T-cell (primary cell): ENCODE measurements at regions of chr5 and their contacts with region 1.

Region 1: DNA sequence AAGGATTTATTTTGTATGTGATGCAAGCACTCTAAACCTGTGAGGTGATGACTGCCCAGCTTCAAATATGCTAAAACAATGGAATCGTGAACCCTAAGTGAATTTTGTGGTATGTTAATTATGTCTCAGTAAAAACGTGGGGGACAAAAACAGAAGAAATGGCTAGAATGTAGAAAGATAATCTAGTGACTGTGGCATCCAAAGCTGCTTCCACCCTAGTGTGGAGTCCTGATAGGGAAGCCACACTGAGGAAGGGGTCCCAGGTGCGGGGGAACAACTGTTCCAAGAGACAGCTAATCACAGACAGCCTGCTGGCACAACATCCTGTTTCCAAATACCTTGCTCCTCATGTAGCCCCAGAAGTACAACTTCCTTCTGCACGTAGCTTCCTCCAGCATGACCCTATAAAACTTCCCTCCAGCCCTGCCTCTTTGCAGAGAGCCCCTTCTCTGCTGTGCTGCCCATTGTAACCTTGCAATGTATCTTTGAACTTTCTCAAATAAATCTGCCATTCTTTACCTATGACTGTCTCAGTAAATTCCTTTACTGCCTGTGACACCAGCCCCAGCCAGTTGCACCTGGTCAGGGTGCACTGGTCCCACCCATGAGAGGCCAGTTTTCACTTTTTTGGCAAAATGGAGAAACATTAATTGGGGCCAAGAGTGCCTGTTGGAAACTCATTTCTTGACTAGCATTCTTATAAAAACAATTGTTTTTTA is 4.9 kb downstream of the GMCL2 start:
- DNase-seq: no peak
- ATAC-seq: peak in 2 of 4 experiments; percentile 16 to 42
- H3K4me3 ChIP-seq: no peak overlapping the region
- H3K4me3 Mint-ChIP-seq: no peak overlapping the region
- H3K27ac ChIP-seq: no peak overlapping the region
- H3K27ac Mint-ChIP-seq: peak overlapping the region in 1 of 2 donors; percentile 25
- H3K4me1 ChIP-seq: peaks cover 0 to 2% of the 10 kb centered on the region in 2 experiments
- H3K4me1 Mint-ChIP-seq: peaks cover 7 to 8% (median 7%) of the 10 kb centered on the region in 3 donors
- H3K27me3 ChIP-seq: no peaks in the 10 kb centered on the region
- H3K27me3 Mint-ChIP-seq: peaks cover 9 to 12% of the 10 kb centered on the region in 2 donors

Region 2: GRCh38 chr5:176436661-176437071 is 1745.7 kb before region 1 on chr5:
- CTCF ChIA-PET with region 1: no interaction called
- POLR2A ChIA-PET with region 1: interaction called in 1 of 2 experiments, 10 read pairs
- DNase-seq: no peak
- ATAC-seq: peak in 3 of 4 experiments; percentile 46 to 54 (median 53)
- H3K4me3 ChIP-seq: peak overlapping the region in 1 of 2 donors; percentile 15
- H3K4me3 Mint-ChIP-seq: peak overlapping the region; percentile 60 to 65 (median 63)
- H3K27ac ChIP-seq: no peak overlapping the region
- H3K27ac Mint-ChIP-seq: peak overlapping the region; percentile 11 to 67
- H3K4me1 ChIP-seq: peaks cover 0 to 5% of the 10 kb centered on the region in 2 experiments
- H3K4me1 Mint-ChIP-seq: peaks cover 8 to 11% (median 10%) of the 10 kb centered on the region in 3 donors
- H3K27me3 ChIP-seq: peaks cover 0 to 10% of the 10 kb centered on the region in 2 experiments
- H3K27me3 Mint-ChIP-seq: peaks cover 5 to 9% of the 10 kb centered on the region in 2 donors

Region 3: DNA sequence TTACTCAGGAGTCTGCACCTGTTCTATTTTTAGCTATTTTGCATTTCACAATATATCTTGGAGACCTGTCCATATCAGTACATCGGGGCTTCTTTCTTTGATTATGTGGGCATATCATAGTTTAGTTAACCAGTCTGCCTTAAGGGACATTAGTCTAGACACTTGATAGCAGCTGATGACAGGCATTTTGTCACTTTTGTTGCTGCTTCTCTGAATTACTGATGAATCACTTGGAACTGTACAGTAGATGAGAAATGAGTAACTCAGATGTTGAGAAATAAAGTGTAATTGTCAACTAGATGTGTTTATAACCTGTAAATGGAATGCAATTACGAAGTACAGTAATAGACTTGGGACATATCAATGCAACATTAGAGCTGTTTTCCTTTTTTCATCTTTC is 720.5 kb after region 1 on chr5:
- CTCF ChIA-PET with region 1: no interaction called
- POLR2A ChIA-PET with region 1: no interaction called
- DNase-seq: no peak
- ATAC-seq: no peak
- H3K4me3 ChIP-seq: no peak overlapping the region
- H3K4me3 Mint-ChIP-seq: no peak overlapping the region
- H3K27ac ChIP-seq: no peak overlapping the region
- H3K27ac Mint-ChIP-seq: no peak overlapping the region
- H3K4me1 ChIP-seq: no peaks in the 10 kb centered on the region
- H3K4me1 Mint-ChIP-seq: no peaks in the 10 kb centered on the region
- H3K27me3 ChIP-seq: no peaks in the 10 kb centered on the region
- H3K27me3 Mint-ChIP-seq: no peaks in the 10 kb centered on the region